Thyroid gland (tissue), 4 donors: ENCODE measurements at regions of chr5 and their contacts with region 1.

Region 1: DNA sequence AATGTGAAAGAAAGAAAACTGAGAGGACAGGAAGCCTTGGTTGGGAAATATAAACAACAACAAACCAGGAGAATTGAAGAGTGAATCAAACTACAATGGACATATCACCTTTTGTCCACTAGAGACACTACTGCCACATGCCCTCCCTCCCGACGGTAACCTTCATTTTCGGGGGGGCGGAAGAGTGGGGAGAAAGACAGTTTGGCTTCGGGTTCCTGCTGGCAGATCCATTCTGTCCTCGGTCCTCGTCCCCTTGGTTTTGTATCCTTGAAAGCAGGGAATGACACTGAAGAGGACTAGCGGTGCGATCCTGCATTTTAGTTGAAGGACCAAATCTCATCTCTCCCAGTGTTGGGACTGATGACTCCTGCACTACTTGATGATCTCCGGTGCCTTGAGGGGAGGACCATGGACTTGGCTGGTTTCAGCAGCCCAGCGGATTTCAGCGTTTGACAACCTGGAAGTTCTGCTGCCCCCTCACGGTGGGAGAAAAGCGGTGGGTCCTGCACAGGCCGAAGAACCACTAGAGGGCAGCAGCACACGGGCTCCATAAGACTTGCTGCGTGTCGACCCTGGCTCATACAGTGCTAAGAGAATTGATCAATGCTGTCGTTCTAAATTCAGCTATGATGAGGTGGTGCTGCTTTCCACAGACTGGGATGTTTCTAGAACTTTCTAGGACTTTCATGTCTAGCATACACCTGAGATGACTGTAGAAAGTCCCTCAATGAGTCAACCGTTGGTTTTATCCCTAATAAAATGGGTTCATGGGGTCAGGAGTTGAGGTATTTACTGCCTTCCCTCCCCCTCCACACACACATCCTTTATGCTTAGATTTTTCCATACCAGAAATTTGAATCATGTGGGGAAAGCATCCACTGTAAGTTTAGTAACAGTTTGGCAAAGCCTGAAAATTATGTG is 15.1 kb upstream of the ZNF131 start:
- DNase-seq: peak; percentile 91 to 92
- H3K4me3 ChIP-seq: peak overlapping the region in 1 of 3 donors; percentile 30
- H3K27ac ChIP-seq: peak overlapping the region; percentile 3 to 76 (median 66)
- H3K4me1 ChIP-seq: peaks cover 5 to 6% of the 10 kb centered on the region in 2 donors
- H3K27me3 ChIP-seq: no peaks in the 10 kb centered on the region
- CTCF ChIP-seq: peak; percentile 96 to 100 (median 99)
- POLR2A ChIP-seq: no peak

Region 2: GRCh38 chr5:42912184-42912798 is 193.3 kb before region 1 on chr5:
- intact Hi-C with region 1: loop called (anchors 10 kb)
- DNase-seq: no peak
- H3K4me3 ChIP-seq: no peak overlapping the region
- H3K27ac ChIP-seq: no peak overlapping the region
- H3K4me1 ChIP-seq: peaks cover 0 to 4% of the 10 kb centered on the region in 2 donors
- H3K27me3 ChIP-seq: no peaks in the 10 kb centered on the region
- CTCF ChIP-seq: no peak
- POLR2A ChIP-seq: no peak

Region 3: DNA sequence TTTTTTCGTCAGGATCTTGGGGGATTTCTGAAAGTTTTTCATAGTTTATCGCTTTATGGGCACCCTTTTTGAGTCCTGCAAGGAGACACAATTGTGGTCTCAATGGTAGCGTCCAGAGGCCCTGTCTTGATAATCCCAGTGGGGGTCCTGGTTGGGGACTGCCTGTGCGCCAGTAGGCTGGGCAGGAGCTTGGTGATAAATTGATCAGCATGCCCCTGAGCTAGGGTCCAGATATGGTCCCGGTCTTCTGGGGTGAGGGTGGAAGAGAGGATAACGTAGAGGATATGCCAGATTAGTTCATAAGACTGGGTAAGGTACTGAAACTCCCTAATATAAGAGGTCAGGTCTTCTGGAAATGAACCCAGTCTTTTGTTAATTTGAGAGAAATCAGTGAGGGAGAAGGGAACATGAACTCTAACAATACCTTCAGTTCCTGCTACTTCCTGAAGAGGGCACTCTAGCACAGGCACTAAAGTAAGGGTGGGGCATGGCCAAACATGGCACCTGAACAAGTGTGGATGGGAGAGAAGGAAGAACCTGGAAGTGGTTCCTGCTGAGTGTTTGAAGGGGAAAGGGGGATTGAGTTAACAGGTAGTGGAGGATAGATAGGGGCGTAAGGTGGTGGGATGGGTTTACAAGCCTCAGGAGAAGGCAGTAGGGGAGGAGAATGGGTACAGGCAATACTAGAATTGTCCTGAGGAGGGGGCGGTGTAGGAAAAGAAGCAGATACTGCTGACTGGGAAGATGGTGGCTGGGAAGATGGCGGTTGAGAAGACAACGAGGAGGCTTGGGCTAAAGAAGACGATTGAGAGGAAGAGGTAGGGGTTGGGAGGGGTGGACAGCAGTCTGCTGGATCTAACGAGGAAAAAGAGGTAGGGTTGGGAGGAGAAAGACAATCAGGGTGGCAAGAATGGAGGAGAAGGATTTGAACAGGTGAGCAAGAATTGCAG is 31.8 kb before region 1 on chr5:
- intact Hi-C with region 1: loop called (anchors 5 kb)
- DNase-seq: no peak
- H3K4me3 ChIP-seq: no peak overlapping the region
- H3K27ac ChIP-seq: no peak overlapping the region
- H3K4me1 ChIP-seq: peaks cover 13 to 23% of the 10 kb centered on the region in 2 donors
- H3K27me3 ChIP-seq: no peaks in the 10 kb centered on the region
- CTCF ChIP-seq: peak in 4 of 6 experiments; percentile 16 to 53 (median 42)
- POLR2A ChIP-seq: no peak

Region 4: GRCh38 chr5:43523662-43524072 is 418.0 kb after region 1 on chr5:
- intact Hi-C with region 1: no loop called
- DNase-seq: no peak
- H3K4me3 ChIP-seq: no peak overlapping the region
- H3K27ac ChIP-seq: no peak overlapping the region
- H3K4me1 ChIP-seq: no peaks in the 10 kb centered on the region
- H3K27me3 ChIP-seq: no peaks in the 10 kb centered on the region
- CTCF ChIP-seq: no peak
- POLR2A ChIP-seq: no peak